ENCODE measurements at regions of chr14 and their contacts with region 1.

Region 1: GRCh38 chr14:59707778-59708561 is 131.4 kb upstream of the CCDC175 start:
- DNase-seq: no peak
- ATAC-seq: no peak
- H3K4me3 ChIP-seq: no peak overlapping the region
- H3K27ac ChIP-seq: no peak overlapping the region
- H3K4me1 ChIP-seq: no peaks in the 10 kb centered on the region
- H3K27me3 ChIP-seq: no peaks in the 10 kb centered on the region

Region 2: GRCh38 chr14:59695198-59695597 is 12.8 kb before region 1 on chr14:
- intact Hi-C with region 1: no loop called
- DNase-seq: no peak
- ATAC-seq: peak; percentile 38
- H3K4me3 ChIP-seq: no peak overlapping the region
- H3K27ac ChIP-seq: no peak overlapping the region
- H3K4me1 ChIP-seq: peaks cover 0 to 2% of the 10 kb centered on the region in 2 donors
- H3K27me3 ChIP-seq: no peaks in the 10 kb centered on the region

Region 3: DNA sequence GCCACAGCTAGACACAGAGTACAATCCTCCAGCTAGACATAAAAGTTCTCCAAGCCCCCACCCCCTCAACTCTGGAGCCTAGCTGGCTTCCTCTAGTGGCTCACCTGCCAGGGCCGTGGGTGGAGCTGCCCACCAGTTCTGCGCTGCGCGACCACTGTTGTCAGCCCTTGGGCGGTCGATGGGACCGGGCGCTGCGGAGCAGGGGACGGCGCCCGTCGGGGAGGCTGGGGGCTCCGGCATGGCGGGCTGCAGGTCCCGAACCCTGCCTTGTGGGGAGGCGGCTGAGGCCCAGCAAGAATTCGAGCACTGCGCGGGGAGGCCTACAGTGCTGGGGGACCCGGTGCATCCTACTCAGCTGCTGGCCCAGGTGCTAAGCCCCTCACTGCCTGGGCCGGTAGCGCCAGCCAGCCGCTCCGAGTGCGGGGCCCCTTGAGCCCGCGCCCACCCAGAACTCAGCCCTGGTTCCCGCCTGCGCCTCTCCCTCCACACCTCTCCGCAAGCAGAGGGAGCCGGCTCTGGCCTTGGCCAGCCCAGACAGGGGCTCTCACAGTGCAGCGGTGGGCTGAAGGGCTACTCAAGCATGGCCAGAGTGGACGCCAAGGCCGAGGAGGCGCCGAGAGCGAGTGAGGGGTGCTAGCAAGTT is 111.6 kb after region 1 on chr14:
- intact Hi-C with region 1: no loop called
- DNase-seq: peak in 1 of 2 donors; percentile 73
- ATAC-seq: peak; percentile 36
- H3K4me3 ChIP-seq: no peak overlapping the region
- H3K27ac ChIP-seq: no peak overlapping the region
- H3K4me1 ChIP-seq: peaks cover 0 to 5% of the 10 kb centered on the region in 2 donors
- H3K27me3 ChIP-seq: no peaks in the 10 kb centered on the region

Region 4: DNA sequence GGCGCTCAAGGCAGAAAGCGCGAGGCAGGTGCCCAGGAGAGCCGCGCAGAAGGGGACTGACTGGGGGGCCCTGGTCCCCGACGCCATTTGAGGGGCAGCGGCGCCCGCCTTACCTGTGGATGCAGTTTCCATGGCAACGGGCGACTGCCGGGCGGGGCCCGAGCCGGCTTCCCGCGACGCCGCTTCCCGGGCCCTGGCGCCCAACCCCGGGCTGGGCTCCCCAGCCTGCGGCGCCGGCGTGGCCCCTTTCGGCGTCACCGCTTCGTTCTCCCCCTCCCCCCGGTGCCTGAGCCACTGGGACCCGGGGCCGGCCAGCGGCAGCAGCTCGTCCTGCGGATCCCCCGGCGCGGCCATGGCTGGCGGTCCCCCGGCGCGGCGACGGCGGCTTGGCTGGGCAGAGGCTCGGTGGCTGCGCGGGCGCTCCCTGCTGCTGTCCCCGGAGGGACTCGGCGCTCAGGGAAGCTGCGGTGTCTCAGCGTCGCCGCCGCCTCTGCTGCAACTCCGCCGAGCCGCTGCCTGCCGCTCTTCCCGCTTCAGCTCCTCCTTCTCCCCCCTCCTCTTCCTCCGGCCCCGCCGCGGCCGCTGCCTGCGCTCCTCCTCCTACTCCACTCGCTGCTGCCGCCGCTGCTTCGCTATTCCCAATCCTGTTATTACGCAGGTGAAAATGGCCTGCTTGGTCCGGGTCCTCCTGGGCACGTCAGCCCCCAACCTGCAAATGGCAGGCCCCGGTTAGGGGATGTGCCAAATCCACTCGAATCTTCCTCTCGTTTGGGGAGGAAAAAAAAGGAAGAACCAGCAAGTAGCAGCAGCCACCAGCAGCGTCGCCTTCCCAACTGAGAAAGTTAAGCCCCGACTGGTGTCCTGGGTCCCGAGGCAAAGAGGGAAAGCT is 162.6 kb after region 1 on chr14 and contains the start of gene RTN1:
- intact Hi-C with region 1: loop called in 1 of 2 experiments (anchors 10 kb)
- DNase-seq: peak; percentile 86 to 92
- ATAC-seq: peak; percentile 91
- H3K4me3 ChIP-seq: peak within 1 kb of the TSS; percentile 55 to 88
- H3K27ac ChIP-seq: peak within 1 kb of the TSS in 1 of 2 donors; percentile 69
- H3K4me1 ChIP-seq: no peaks in the 10 kb centered on the region
- H3K27me3 ChIP-seq: no peaks in the 10 kb centered on the region
- total RNA-seq, gene RTN1: 17.8 to 42.4 TPM

Region 5: DNA sequence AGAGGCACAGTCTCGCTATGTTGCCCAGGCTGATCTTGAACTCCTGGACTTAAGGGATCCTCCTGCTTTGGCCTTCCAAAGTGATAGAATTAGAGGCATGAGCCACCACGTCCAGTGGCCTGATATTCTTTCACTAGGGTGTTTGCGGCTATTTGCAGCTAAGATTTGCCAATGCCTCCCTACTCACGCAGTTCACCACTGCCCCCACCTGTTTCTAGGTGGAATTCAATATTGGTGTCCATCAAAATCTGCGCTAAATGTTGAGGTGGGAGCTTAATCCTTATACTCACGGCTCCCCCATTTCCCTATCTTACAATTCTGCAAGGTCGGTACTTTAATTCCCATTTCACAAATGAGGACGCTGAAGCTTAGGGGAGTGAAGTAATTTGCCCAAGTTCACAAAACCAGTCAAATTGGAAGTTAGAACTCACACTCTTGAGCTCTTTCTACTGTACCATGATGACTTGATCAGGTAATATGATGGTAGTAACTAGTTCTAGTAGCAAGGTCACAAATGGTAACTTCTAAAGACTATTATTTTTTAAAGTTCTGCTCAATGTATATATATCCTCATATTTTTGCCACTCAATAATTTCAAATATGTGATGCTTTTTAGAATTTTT is 189.9 kb after region 1 on chr14:
- intact Hi-C with region 1: loop called (anchors 5 kb)
- DNase-seq: no peak
- ATAC-seq: peak; percentile 84
- H3K4me3 ChIP-seq: no peak overlapping the region
- H3K27ac ChIP-seq: no peak overlapping the region
- H3K4me1 ChIP-seq: no peaks in the 10 kb centered on the region
- H3K27me3 ChIP-seq: no peaks in the 10 kb centered on the region

Measured in aorta (tissue), 5 donors.